ENCODE measurements at regions of chr4 and their contacts with region 1.

Region 1: DNA sequence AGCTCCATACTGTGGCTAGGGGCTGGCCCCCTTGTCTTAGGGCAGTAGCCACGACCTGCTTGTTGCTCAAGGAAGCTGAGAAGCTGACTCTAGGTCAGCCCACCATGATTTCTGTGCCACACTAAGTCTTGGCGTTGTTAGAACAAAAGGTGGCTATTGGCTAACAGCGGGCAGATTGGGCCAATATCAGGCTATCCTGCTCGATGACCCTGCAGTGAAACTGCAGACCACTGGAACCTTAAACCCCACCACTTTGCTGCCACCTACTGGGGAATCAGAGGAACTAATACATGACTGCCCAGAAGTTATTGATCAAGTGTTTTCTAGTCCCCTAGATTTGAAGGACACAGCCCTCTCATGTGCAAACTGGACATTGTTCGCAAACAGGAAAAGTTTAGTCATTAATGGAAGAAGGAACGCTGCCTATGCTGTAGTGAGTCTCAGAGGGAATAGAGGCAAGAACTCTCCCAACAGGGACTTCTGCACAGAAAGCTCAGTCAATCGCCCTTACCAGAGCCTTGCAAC is 17.0 kb upstream of the PAPSS1 start:
- DNase-seq: peak in 23 of 35 experiments; percentile 6 to 71 (median 26)
- ATAC-seq: peak; percentile 51 to 61 (median 54)
- H3K4me3 ChIP-seq: no peak overlapping the region
- H3K4me3 Mint-ChIP-seq: no peak overlapping the region
- H3K27ac ChIP-seq: no peak overlapping the region
- H3K27ac Mint-ChIP-seq: no peak overlapping the region
- H3K4me1 ChIP-seq: no peaks in the 10 kb centered on the region
- H3K4me1 Mint-ChIP-seq: no peaks in the 10 kb centered on the region
- H3K27me3 ChIP-seq: no peaks in the 10 kb centered on the region
- H3K27me3 Mint-ChIP-seq: no peaks in the 10 kb centered on the region

Region 2: DNA sequence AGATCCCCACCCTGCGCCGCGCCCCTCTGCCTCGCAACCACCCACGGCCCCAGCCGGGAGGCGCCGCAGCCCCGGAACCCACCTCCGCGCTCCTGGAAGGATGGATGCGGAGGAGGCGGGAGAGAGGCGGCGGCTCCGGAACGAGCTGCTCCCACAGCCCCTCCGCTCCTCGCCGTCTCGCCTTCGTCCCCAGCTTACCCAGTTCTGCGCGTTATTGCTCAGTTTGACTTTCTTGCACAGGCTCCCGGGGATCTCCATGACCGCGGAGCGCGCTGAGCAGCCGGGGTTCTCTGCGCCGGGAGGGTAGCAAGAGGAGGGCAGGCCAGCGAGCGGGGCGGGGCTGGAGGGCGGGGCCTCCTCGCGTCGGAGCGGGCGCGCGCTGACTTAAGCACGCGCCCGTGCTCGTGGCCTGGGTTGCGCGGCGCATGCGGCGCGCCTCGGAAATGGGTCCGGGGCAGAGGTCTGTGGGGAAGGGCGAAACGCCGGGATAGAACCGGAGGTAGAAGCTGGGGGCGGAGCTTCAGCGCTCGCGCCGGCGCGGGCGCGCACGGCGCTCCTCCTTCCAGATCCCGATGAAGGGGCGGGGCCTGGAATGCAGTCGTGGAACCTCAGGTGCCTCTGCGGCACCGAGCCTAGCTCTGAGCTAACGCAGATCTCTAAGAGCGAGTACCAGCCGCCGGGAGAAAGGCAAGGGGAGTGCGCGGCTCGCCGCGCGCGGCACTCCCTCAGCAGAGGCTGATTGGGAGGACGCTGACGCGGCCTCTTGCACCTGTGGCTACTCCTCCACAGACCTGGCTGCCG is 16.9 kb before region 1 on chr4 and contains the start of gene PAPSS1:
- CTCF ChIA-PET with region 1: interaction called, 6 to 10 read pairs
- POLR2A ChIA-PET with region 1: interaction called in 1 of 2 experiments, 6 read pairs
- DNase-seq: peak; percentile 85 to 98 (median 94)
- ATAC-seq: peak; percentile 89 to 92 (median 90)
- H3K4me3 ChIP-seq: peak within 1 kb of the TSS; percentile 79
- H3K4me3 Mint-ChIP-seq: peak within 1 kb of the TSS; percentile 90 to 95 (median 92)
- H3K27ac ChIP-seq: peak within 1 kb of the TSS; percentile 78
- H3K27ac Mint-ChIP-seq: peak within 1 kb of the TSS; percentile 93 to 95
- H3K4me1 ChIP-seq: peaks cover 13 to 18% of the 10 kb centered on the region in 2 experiments
- H3K4me1 Mint-ChIP-seq: peaks cover 33 to 39% (median 34%) of the 10 kb centered on the region in 3 donors
- H3K27me3 ChIP-seq: no peaks in the 10 kb centered on the region
- H3K27me3 Mint-ChIP-seq: no peaks in the 10 kb centered on the region
- total RNA-seq, gene PAPSS1: 11.6 to 22.0 (median 15.7) TPM